MCF 10A (cell line): ENCODE measurements at regions of chr16 and their contacts with region 1.

Region 1: DNA sequence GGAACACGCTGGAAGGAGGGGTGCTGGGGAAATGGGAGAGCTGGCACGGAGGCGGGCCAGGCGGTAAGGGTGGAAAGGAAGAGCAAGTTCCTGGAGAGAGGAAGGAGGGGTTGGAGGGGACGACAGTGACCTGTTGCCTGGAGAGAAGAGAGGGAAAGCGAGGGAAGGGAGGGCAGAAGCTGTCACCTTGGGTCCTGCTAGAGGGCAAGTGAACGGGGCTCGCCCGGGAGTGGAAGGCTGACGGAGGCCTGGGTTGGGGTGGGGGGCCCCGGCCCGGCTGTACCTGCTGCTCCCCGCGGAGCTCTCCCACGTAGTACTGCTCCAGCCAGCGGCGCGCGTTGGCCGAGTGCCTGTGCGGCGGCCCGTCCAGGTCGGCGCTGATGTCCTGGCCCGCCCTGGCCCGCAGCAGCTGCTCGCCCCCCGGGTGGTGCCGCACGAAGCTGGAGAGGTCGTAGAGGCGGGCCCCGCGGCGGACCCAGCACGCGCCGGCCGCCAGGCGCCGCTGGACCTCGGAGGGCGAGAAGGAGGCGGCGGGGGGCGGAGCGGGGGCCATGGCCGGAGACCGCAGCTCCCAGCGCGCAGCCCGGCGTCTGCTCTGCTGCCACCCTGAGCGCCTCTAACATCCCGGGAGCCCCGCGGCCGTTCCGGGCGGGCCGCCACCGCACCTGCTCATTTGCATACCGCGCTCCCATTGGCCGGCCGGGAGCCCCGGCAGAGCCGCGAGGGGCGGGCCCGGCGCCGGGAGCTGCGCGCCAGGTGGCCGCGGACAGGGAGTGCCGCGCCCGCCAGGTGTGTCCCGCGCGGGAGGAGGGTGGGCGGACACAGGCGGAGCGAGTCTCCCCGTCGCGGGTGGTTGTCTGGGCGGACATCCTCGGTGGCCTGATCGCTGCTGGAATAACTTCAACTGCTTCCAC is at the start of gene FA2H:
- DNase-seq: peak; percentile 88
- H3K4me3 Mint-ChIP-seq: peak within 1 kb of the TSS; percentile 62
- H3K27ac Mint-ChIP-seq: no peak within 1 kb of the TSS
- H3K4me1 Mint-ChIP-seq: peaks cover 13% of the 10 kb centered on the region
- H3K27me3 Mint-ChIP-seq: peaks cover 23% of the 10 kb centered on the region
- CTCF ChIP-seq: peak; percentile 32
- total RNA-seq, gene FA2H: not detected in 2 replicates

Region 2: DNA sequence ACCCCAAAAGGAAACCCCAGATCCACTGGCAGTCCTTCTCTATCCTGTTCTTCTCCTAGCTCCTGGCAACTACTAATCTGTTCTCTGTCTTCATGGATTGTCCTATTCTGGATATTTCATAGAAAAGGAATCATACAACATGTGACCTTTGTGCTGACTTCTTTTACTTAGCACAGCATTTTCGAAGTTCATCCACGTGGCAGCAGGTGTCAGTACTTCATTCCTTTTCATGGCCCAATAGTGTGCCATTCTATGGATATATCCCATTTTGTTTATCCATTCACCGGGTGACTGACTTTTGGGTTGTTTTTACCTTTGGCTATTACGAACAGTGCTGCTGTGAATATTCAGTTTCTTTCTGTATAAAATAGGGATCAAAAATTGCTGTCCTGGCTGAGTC is 10.6 kb after region 1 on chr16:
- CTCF ChIA-PET with region 1: interaction called, 4 read pairs
- POLR2A ChIA-PET with region 1: interaction called, 10 read pairs
- intact Hi-C with region 1: no loop called
- DNase-seq: no peak
- H3K4me3 Mint-ChIP-seq: no peak overlapping the region
- H3K27ac Mint-ChIP-seq: no peak overlapping the region
- H3K4me1 Mint-ChIP-seq: no peaks in the 10 kb centered on the region
- H3K27me3 Mint-ChIP-seq: peaks cover 12% of the 10 kb centered on the region
- CTCF ChIP-seq: no peak